ENCODE measurements at regions of chr1 and their contacts with region 1.

Region 1: GRCh38 chr1:218401998-218402785 is 57.1 kb downstream of the TGFB2 start:
- DNase-seq: no peak
- H3K4me3 Mint-ChIP-seq: no peak overlapping the region
- H3K27ac Mint-ChIP-seq: no peak overlapping the region
- H3K4me1 Mint-ChIP-seq: peaks cover 10% of the 10 kb centered on the region
- H3K27me3 Mint-ChIP-seq: no peaks in the 10 kb centered on the region
- CTCF ChIP-seq: no peak

Region 2: GRCh38 chr1:218164111-218164929 is 237.9 kb before region 1 on chr1:
- CTCF ChIA-PET with region 1: no interaction called
- POLR2A ChIA-PET with region 1: no interaction called
- intact Hi-C with region 1: no loop called
- DNase-seq: no peak
- H3K4me3 Mint-ChIP-seq: no peak overlapping the region
- H3K27ac Mint-ChIP-seq: no peak overlapping the region
- H3K4me1 Mint-ChIP-seq: no peaks in the 10 kb centered on the region
- H3K27me3 Mint-ChIP-seq: peaks cover 86% of the 10 kb centered on the region
- CTCF ChIP-seq: no peak

Region 3: DNA sequence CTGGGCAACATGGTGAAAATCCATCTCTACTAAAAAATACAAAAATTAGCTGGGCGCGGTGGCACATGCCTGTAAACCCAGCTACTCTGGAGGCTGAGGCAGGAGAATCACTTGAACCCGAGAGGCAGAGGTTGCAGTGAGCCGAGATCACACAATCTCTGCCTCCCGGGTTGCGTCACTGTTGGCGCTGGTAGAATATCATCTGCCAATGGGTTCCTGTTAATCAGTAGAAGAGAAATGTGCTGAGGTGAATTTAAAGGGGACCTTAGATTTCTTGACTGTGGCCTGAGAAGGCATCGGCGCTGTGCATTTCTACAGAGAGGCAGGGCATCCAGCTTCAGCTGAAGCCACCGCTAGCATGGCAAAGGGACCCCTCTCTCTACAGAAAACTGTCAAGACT is 11.0 kb after region 1 on chr1:
- CTCF ChIA-PET with region 1: interaction called, 4 read pairs
- POLR2A ChIA-PET with region 1: interaction called, 4 read pairs
- intact Hi-C with region 1: loop called (anchors 1 kb)
- DNase-seq: no peak
- H3K4me3 Mint-ChIP-seq: no peak overlapping the region
- H3K27ac Mint-ChIP-seq: no peak overlapping the region
- H3K4me1 Mint-ChIP-seq: peaks cover 10% of the 10 kb centered on the region
- H3K27me3 Mint-ChIP-seq: no peaks in the 10 kb centered on the region
- CTCF ChIP-seq: no peak

Region 4: GRCh38 chr1:218439541-218440295 is 37.5 kb after region 1 on chr1:
- CTCF ChIA-PET with region 1: no interaction called
- POLR2A ChIA-PET with region 1: no interaction called
- intact Hi-C with region 1: loop called (anchors 5 kb)
- DNase-seq: no peak
- H3K4me3 Mint-ChIP-seq: no peak overlapping the region
- H3K27ac Mint-ChIP-seq: no peak overlapping the region
- H3K4me1 Mint-ChIP-seq: no peaks in the 10 kb centered on the region
- H3K27me3 Mint-ChIP-seq: no peaks in the 10 kb centered on the region
- CTCF ChIP-seq: no peak

Measured in MCF 10A (cell line).